Ovary (tissue), 10 donors: ENCODE measurements at regions of chr1 and their contacts with region 1.

Region 1: GRCh38 chr1:39081266-39082009 is 55.3 kb downstream of the NDUFS5 start:
- DNase-seq: peak in 3 of 5 donors; percentile 44 to 58 (median 56)
- H3K4me3 ChIP-seq: peak overlapping the region; percentile 55
- H3K27ac ChIP-seq: peak overlapping the region in 1 of 2 donors; percentile 83
- H3K4me1 ChIP-seq: peaks cover 5% of the 10 kb centered on the region
- H3K27me3 ChIP-seq: no peaks in the 10 kb centered on the region
- CTCF ChIP-seq: peak in 1 of 3 donors; percentile 22
- EP300 ChIP-seq: no peak
- POLR2A ChIP-seq: no peak

Region 2: DNA sequence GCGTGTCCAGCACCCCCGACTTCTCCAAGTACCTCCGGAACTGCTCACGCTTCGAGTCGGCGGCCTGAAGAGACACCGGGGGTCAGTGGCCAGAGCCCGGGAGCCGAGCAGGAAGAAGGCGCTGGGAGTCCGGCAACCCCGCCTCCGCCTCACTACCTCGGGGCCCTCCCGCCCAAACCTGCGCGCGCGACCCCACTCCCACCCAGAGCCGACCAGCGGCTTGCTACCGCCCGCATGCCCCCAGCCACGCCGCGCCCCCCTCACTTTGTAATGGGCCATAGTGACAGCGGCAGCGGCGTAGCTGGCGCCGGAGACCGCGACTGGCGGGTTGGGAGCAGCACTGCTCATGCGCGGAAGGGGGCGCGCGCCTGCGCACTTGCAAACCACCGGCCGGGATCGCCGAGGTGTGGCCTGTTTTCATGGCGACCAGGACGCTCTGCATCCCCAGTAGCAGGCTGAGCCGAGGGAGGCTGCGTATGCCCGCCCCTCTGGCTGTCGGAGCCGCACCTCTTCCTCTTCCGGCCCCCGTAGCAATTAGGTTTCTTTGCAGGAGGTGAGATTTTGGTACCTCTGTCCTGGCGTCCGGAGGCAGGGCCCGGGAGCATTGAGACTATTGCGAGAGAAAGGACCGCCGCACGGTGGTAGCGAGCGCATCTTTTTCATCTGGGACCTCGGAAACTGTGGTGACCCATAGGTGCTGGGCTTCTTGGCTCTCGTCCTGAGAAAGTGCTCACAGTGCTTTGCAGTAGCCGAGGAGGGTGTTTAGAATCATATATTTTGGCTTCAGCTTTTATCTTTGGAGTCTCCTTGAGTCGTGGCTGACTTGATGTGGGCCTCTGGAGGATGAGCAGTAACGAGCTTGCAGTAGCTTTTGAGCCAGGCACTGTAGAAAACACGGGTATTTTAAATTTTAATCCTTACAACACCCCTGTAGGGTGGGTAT is 208.1 kb before region 1 on chr1 and contains the start of gene MYCBP:
- intact Hi-C with region 1: loop called in 1 of 4 experiments (anchors 5 kb)
- DNase-seq: peak; percentile 94 to 97 (median 94)
- H3K4me3 ChIP-seq: peak within 1 kb of the TSS; percentile 98
- H3K27ac ChIP-seq: peak within 1 kb of the TSS; percentile 2 to 34
- H3K4me1 ChIP-seq: no peaks in the 10 kb centered on the region
- H3K27me3 ChIP-seq: no peaks in the 10 kb centered on the region
- CTCF ChIP-seq: peak in 2 of 3 donors; percentile 10 to 51
- EP300 ChIP-seq: no peak
- POLR2A ChIP-seq: no peak
- total RNA-seq, gene MYCBP: 8.8 to 15.2 (median 12.2) TPM

Region 3: GRCh38 chr1:39034114-39034654 is 47.3 kb before region 1 on chr1:
- intact Hi-C with region 1: loop called in 1 of 4 experiments (anchors 5 kb)
- DNase-seq: no peak
- H3K4me3 ChIP-seq: no peak overlapping the region
- H3K27ac ChIP-seq: no peak overlapping the region
- H3K4me1 ChIP-seq: no peaks in the 10 kb centered on the region
- H3K27me3 ChIP-seq: no peaks in the 10 kb centered on the region
- CTCF ChIP-seq: no peak
- EP300 ChIP-seq: no peak
- POLR2A ChIP-seq: no peak

Region 4: DNA sequence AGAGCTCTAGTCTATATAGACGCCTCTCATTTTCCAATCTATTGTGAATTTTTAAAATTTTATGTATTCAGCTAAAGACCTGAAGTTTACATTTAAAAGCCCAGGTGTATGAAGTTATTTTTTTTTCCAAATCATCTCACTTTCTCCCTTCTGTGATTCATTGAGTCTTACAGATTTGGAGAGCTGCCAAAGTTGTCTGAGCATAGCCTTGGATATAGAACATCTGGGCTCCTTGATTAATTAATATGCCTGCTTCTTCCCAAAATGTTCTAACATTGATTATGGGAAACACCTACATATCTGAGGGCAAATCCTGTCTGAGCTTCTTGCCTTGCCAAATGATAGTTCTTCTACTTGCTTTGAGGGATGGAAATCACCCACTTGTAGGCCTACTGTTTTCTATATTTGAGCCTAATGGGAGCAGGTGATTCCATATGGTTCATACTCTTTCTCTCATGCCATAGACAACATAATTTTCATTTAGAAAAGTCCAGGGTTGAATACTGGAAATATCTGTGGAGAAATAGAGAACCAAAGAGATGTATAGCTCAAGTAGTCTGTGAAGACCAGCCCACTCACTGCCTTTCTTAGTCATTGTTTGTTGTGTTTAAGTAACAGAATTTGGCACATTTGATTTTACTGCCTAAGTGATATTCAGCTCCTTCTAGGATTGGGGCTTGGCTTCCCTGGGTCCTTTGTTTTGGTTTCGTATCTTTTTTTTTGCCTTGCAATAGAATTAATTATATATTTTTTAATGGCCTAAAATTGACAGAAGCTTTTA is 169.2 kb after region 1 on chr1:
- intact Hi-C with region 1: no loop called
- DNase-seq: no peak
- H3K4me3 ChIP-seq: no peak overlapping the region
- H3K27ac ChIP-seq: no peak overlapping the region
- H3K4me1 ChIP-seq: peaks cover 26% of the 10 kb centered on the region
- H3K27me3 ChIP-seq: no peaks in the 10 kb centered on the region
- CTCF ChIP-seq: no peak
- EP300 ChIP-seq: no peak
- POLR2A ChIP-seq: no peak